CD4-positive, alpha-beta T cell (primary cell): ENCODE measurements at regions of chr16 and their contacts with region 1.

Region 1: GRCh38 chr16:56317998-56318826 is 107.1 kb downstream of the AMFR start:
- DNase-seq: peak; percentile 58 to 84 (median 69)
- ATAC-seq: peak; percentile 99
- H3K4me3 ChIP-seq: peak overlapping the region; percentile 35
- H3K4me3 Mint-ChIP-seq: no peak overlapping the region
- H3K27ac ChIP-seq: no peak overlapping the region
- H3K27ac Mint-ChIP-seq: no peak overlapping the region
- H3K4me1 ChIP-seq: peaks cover 9% of the 10 kb centered on the region
- H3K4me1 Mint-ChIP-seq: no peaks in the 10 kb centered on the region
- H3K27me3 ChIP-seq: no peaks in the 10 kb centered on the region
- H3K27me3 Mint-ChIP-seq: no peaks in the 10 kb centered on the region
- CTCF ChIP-seq: peak; percentile 83

Region 2: DNA sequence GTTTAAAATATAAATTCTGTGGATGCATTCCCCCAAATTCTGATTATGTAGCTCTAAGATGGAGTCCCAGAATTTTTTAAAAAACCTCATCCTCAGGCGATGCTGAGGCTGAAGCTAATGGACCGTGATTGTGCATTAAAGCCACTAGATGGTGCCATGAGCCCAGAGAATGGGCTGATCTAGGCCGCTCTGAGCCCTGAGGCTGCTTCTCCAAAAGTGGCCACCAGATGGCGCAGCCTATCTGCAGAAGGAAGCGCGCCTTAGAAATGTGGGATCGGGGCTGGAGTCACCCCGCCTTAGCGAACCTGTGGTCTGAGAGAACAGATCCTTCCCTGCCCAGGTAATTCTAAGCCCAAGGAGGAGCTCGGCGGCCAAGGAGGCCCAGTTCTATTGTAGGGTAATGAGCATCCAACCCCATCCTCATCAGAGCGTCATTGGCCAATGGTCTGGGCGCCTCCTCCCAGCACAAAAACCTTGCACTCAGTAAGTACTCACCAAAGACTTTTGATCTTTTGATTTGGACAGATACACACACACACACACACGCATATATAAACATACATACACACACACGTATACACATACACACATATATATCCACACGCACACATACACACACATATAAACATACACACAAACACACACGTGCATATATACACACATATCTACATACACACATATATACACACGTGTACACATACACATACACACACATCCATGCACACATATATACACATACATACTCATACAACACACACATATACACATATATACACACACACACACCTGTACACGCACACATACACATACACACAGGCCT is 852.9 kb before region 1 on chr16:
- CTCF ChIA-PET with region 1: interaction called, 4 read pairs
- POLR2A ChIA-PET with region 1: no interaction called
- intact Hi-C with region 1: loop called in 1 of 2 experiments (anchors 5 kb)
- DNase-seq: peak; percentile 72 to 88 (median 76)
- ATAC-seq: peak; percentile 99
- H3K4me3 ChIP-seq: no peak overlapping the region
- H3K4me3 Mint-ChIP-seq: no peak overlapping the region
- H3K27ac ChIP-seq: no peak overlapping the region
- H3K27ac Mint-ChIP-seq: no peak overlapping the region
- H3K4me1 ChIP-seq: peaks cover 2% of the 10 kb centered on the region
- H3K4me1 Mint-ChIP-seq: no peaks in the 10 kb centered on the region
- H3K27me3 ChIP-seq: no peaks in the 10 kb centered on the region
- H3K27me3 Mint-ChIP-seq: peaks cover 5% of the 10 kb centered on the region
- CTCF ChIP-seq: peak; percentile 99

Region 3: GRCh38 chr16:55842369-55843104 is 475.7 kb before region 1 on chr16:
- CTCF ChIA-PET with region 1: no interaction called
- POLR2A ChIA-PET with region 1: no interaction called
- intact Hi-C with region 1: loop called in 1 of 2 experiments (anchors 5 kb)
- DNase-seq: peak in 5 of 14 experiments; percentile 3 to 62 (median 50)
- ATAC-seq: no peak
- H3K4me3 ChIP-seq: no peak overlapping the region
- H3K4me3 Mint-ChIP-seq: no peak overlapping the region
- H3K27ac ChIP-seq: no peak overlapping the region
- H3K27ac Mint-ChIP-seq: no peak overlapping the region
- H3K4me1 ChIP-seq: no peaks in the 10 kb centered on the region
- H3K4me1 Mint-ChIP-seq: no peaks in the 10 kb centered on the region
- H3K27me3 ChIP-seq: peaks cover 10% of the 10 kb centered on the region in 2 experiments
- H3K27me3 Mint-ChIP-seq: peaks cover 29% of the 10 kb centered on the region
- CTCF ChIP-seq: peak; percentile 71

Region 4: DNA sequence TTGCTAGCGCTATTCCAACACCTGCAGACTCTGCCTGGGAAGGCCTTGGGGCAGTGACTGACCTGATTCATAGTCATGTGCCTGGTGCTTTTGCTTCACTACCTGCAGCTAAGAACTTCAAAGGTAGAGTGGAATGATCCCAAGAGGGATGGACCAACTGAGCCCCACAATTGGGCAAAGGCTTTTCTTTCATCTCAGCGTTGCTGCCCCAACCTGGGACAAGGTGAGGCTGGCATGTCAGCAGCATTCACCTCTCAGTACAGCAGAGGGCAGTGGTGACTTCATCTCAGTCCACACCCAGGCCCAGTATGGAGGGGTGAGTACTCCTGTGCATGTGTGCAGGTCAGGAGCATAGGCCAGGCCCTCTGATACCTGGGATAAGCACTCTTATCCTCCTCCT is 276.5 kb before region 1 on chr16:
- CTCF ChIA-PET with region 1: interaction called, 7 read pairs
- POLR2A ChIA-PET with region 1: no interaction called
- intact Hi-C with region 1: loop called in 1 of 2 experiments (anchors 1 kb)
- DNase-seq: peak in 8 of 14 experiments; percentile 1 to 64 (median 19)
- ATAC-seq: no peak
- H3K4me3 ChIP-seq: no peak overlapping the region
- H3K4me3 Mint-ChIP-seq: no peak overlapping the region
- H3K27ac ChIP-seq: no peak overlapping the region
- H3K27ac Mint-ChIP-seq: no peak overlapping the region
- H3K4me1 ChIP-seq: no peaks in the 10 kb centered on the region
- H3K4me1 Mint-ChIP-seq: no peaks in the 10 kb centered on the region
- H3K27me3 ChIP-seq: no peaks in the 10 kb centered on the region
- H3K27me3 Mint-ChIP-seq: peaks cover 36% of the 10 kb centered on the region
- CTCF ChIP-seq: peak; percentile 12

Region 5: GRCh38 chr16:56262148-56262547 is 56.1 kb before region 1 on chr16:
- CTCF ChIA-PET with region 1: interaction called, 11 read pairs
- POLR2A ChIA-PET with region 1: no interaction called
- intact Hi-C with region 1: no loop called
- DNase-seq: peak; percentile 18 to 93 (median 56)
- ATAC-seq: peak; percentile 96
- H3K4me3 ChIP-seq: peak overlapping the region; percentile 4
- H3K4me3 Mint-ChIP-seq: peak overlapping the region; percentile 23
- H3K27ac ChIP-seq: peak overlapping the region in 1 of 2 donors; percentile 51
- H3K27ac Mint-ChIP-seq: peak overlapping the region; percentile 75
- H3K4me1 ChIP-seq: peaks cover 49% of the 10 kb centered on the region
- H3K4me1 Mint-ChIP-seq: peaks cover 46% of the 10 kb centered on the region
- H3K27me3 ChIP-seq: no peaks in the 10 kb centered on the region
- H3K27me3 Mint-ChIP-seq: no peaks in the 10 kb centered on the region
- CTCF ChIP-seq: no peak

Region 6: DNA sequence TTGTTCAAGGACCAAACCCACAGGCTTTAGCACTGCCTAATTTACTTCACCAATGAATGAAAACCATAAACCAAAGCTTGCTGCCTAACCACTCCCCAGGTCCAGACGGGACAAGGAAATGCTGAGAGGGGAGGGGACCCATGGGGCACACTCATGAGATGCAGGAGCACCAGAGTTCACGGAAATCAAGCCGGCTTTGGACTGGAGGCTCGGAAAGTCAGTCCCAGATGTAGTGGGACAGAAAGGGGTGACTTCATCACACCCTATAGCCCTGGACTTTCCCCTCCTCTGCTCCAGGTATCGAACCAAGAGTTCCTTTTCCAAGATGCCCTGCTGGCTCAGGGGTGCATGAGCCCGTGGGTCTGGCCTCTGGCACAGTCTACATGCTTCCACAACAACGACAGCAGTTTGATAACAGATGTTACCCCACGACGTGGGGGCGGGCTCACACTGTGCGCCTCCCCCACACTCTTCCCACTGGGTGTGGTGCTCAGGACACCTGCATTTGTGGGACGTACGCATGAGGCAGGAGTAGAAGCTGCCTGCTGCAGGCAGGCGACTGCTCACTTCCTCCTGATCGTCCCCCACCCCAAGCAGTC is 43.9 kb after region 1 on chr16:
- CTCF ChIA-PET with region 1: no interaction called
- POLR2A ChIA-PET with region 1: no interaction called
- intact Hi-C with region 1: no loop called
- DNase-seq: no peak
- ATAC-seq: no peak
- H3K4me3 ChIP-seq: no peak overlapping the region
- H3K4me3 Mint-ChIP-seq: no peak overlapping the region
- H3K27ac ChIP-seq: no peak overlapping the region
- H3K27ac Mint-ChIP-seq: no peak overlapping the region
- H3K4me1 ChIP-seq: peaks cover 6% of the 10 kb centered on the region
- H3K4me1 Mint-ChIP-seq: peaks cover 17% of the 10 kb centered on the region
- H3K27me3 ChIP-seq: no peaks in the 10 kb centered on the region
- H3K27me3 Mint-ChIP-seq: no peaks in the 10 kb centered on the region
- CTCF ChIP-seq: no peak

Region 7: GRCh38 chr16:56373003-56373402 is 54.8 kb after region 1 on chr16:
- CTCF ChIA-PET with region 1: no interaction called
- POLR2A ChIA-PET with region 1: no interaction called
- intact Hi-C with region 1: no loop called
- DNase-seq: no peak
- ATAC-seq: no peak
- H3K4me3 ChIP-seq: no peak overlapping the region
- H3K4me3 Mint-ChIP-seq: no peak overlapping the region
- H3K27ac ChIP-seq: no peak overlapping the region
- H3K27ac Mint-ChIP-seq: no peak overlapping the region
- H3K4me1 ChIP-seq: peaks cover 16% of the 10 kb centered on the region
- H3K4me1 Mint-ChIP-seq: peaks cover 16% of the 10 kb centered on the region
- H3K27me3 ChIP-seq: no peaks in the 10 kb centered on the region
- H3K27me3 Mint-ChIP-seq: no peaks in the 10 kb centered on the region
- CTCF ChIP-seq: no peak